Heart left ventricle (tissue), 16 donors: ENCODE measurements at regions of chr14 and their contacts with region 1.

Region 1: GRCh38 chr14:44833376-44834060 is 128.2 kb downstream of the KLHL28 start:
- DNase-seq: no peak
- ATAC-seq: no peak
- H3K4me3 ChIP-seq: no peak overlapping the region
- H3K27ac ChIP-seq: no peak overlapping the region
- H3K4me1 ChIP-seq: no peaks in the 10 kb centered on the region
- H3K27me3 ChIP-seq: no peaks in the 10 kb centered on the region
- CTCF ChIP-seq: no peak
- POLR2A ChIP-seq: no peak

Region 2: DNA sequence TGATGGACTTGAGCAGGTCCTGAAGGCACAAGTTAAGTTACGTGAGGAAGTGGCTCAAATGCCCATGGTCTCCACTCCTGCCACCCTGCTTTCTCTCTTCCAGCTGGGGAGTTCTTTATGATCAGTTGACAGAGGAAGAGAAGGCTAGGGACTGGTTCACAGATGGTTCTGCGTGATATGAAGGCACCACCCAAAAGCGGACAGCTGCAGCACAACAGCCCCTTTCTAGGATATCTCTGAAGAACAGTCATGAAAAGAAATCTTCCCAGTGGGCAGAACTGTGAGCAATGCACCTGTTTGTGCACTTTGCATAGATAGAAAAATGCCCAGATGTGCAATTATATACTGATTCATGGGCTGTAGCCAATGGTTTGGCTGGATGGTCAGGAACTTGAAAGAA is 164.0 kb before region 1 on chr14:
- intact Hi-C with region 1: loop called in 1 of 10 experiments (anchors 5 kb)
- DNase-seq: no peak
- ATAC-seq: no peak
- H3K4me3 ChIP-seq: no peak overlapping the region
- H3K27ac ChIP-seq: no peak overlapping the region
- H3K4me1 ChIP-seq: no peaks in the 10 kb centered on the region
- H3K27me3 ChIP-seq: no peaks in the 10 kb centered on the region
- CTCF ChIP-seq: no peak
- POLR2A ChIP-seq: no peak

Region 3: DNA sequence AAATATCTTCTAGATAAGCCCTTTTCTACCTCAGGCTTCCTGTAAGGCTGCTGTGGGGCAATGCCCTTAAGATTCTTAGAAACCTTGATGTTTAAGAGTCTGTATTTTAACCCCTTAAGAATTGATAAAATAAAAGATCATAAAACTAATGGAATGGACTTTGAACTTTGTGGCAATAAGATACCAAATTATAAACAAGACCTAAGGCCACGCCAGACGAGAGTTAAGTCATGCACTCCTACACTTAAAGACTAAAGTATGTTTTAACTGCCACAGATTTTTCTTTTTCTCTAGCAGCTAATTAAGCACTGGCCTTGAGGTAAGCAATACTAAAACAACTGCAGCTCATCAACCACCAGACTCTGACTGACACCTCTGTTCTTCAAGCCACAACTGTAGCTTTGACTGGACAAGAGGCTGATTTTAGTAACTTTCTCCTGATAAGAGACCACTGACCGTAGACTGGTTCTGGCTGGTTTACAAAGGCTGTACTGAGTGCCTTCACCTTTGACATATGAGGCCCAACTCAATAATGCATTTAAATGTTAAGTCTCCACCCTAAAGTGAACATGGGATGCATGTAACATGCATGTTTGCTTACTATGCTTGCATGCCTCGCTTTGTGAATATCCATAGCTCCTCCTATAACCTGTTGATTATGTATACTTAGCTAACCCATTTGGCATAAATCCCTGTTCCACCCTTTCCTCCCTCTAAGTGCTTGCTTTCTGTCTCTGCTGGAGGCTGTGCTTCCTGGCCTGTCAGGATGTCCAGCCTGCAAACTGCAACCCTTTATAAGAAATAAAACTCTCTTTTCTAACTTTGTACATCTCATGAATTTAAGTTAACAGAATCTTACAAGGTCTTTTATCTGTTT is 56.3 kb after region 1 on chr14:
- intact Hi-C with region 1: no loop called
- DNase-seq: no peak
- ATAC-seq: no peak
- H3K4me3 ChIP-seq: no peak overlapping the region
- H3K27ac ChIP-seq: no peak overlapping the region
- H3K4me1 ChIP-seq: no peaks in the 10 kb centered on the region
- H3K27me3 ChIP-seq: no peaks in the 10 kb centered on the region
- CTCF ChIP-seq: no peak
- POLR2A ChIP-seq: no peak